OCI-LY7 (cell line): ENCODE measurements at regions of chr5 and their contacts with region 1.

Region 1: DNA sequence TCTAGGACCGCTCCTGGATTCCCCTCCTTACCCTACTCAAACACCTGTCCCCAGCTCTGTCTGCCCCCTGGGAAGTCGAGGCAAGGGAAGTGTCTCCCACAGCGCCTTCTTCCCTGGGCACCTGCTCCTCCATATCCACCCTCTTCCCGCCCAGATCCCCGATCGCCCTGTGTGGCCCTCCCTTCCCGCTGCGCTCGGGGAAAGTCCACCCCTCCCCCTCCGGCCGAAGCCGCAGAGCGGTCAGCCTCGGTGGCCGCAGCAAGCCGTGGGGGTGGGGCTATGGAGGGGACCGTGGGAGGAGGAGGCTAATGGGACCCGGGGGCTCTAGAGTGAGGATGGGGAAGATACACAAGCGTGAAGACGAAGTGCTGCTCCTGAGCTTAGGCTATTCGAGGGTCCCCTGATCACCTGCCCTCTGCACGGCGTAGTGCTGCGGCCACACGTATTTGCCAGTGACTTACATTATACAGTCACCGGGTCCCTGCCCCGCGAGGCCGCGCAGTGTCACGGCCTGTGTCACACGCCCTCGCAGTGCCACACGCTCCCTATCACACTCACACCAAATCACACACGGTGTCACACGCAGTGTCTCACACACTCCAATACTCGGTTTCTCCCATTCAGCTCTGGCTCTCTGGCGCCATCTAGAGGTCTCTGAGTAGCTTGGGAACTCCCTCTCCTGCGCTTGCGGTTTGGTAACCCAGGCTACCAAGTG is 658 bp upstream of the PCDH1 start:
- DNase-seq: peak; percentile 89
- H3K4me3 ChIP-seq: no peak overlapping the region
- H3K27ac ChIP-seq: no peak overlapping the region
- H3K4me1 ChIP-seq: peaks cover 10% of the 10 kb centered on the region
- CTCF ChIP-seq: peak; percentile 97

Region 2: GRCh38 chr5:141101059-141101458 is 777.8 kb before region 1 on chr5:
- CTCF ChIA-PET with region 1: no interaction called
- POLR2A ChIA-PET with region 1: no interaction called
- intact Hi-C with region 1: no loop called
- DNase-seq: no peak
- H3K4me3 ChIP-seq: no peak overlapping the region
- H3K27ac ChIP-seq: no peak overlapping the region
- H3K4me1 ChIP-seq: no peaks in the 10 kb centered on the region
- CTCF ChIP-seq: no peak

Region 3: DNA sequence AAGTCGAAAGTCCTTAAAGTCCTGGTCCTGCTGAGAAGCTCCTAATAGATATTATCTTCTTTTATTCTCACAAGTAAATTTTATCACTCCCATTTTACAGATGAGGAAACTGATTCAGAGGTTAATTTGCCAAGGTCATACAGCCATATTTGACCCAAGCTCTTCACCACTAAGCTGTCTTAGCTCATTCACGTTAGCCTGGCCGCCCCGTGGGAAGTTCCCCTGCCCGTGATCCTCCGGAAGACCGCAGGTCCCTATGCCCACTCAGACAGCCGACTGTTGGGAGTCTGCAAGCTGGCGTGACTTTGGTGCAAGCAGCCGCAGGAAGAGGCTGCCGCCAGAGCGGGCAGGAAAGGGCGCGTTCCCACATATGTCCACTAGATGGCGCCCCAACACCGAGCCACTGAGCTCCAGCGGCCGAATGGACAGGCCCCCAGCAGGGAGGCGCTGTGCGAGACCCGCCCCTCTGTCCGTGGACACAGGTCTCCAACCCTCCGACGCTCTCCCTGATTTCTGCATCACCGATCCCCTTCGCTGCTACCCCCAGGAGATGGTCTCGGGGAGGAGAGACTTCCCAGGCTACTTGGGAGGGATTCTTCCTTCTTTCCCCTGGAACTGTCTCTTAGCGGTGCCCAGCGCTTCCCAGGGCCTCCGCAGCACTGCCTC is 186.9 kb before region 1 on chr5:
- CTCF ChIA-PET with region 1: interaction called, 6 read pairs
- POLR2A ChIA-PET with region 1: interaction called, 5 read pairs
- intact Hi-C with region 1: loop called (anchors 1 kb)
- DNase-seq: peak; percentile 81
- H3K4me3 ChIP-seq: peak overlapping the region; percentile 52
- H3K27ac ChIP-seq: no peak overlapping the region
- H3K4me1 ChIP-seq: peaks cover 16% of the 10 kb centered on the region
- CTCF ChIP-seq: peak; percentile 91

Region 4: DNA sequence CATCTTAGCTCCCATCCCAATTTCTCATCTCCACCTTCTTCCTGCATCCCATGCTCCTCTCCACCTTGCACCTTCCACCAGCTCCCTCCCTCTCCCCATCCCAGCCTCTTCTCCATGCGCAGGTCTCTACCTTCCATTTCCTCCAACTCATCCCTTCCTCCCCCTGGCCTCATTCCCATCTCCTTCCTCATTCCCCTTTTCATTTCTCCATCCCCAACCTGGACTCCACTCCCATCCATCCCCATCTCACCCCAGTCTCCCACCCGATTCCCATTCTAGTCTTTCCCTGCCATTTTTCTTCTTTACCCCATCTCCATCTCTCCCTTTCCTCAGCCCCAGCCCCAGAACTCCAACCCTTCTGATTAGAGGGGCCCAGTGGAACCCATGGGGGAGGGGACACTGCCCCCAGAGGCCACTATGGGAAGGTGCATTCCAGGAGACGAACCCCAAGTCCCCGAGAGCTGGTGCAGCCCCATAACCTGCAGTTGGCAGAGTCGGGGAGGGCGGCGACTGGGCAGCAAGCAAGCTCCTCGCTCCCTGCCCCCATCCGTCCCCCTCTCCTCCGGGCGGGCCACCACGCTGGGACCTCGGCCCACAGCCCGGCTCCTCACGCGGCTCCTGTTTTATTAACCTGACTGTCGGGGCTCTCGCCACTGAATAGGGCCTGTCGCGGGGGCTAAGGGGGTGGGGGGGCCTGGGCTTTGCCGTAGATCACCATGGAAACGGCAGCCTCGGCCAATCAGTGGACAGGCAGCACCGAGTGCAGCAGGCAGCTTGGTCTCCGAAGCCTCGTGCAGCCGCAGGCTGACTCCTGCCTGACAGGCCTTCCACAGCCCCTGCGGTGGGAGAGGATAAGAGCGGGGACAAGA is 67.3 kb before region 1 on chr5:
- CTCF ChIA-PET with region 1: interaction called, 14 read pairs
- POLR2A ChIA-PET with region 1: no interaction called
- intact Hi-C with region 1: loop called (anchors 5 kb)
- DNase-seq: peak; percentile 49
- H3K4me3 ChIP-seq: no peak overlapping the region
- H3K27ac ChIP-seq: no peak overlapping the region
- H3K4me1 ChIP-seq: peaks cover 12% of the 10 kb centered on the region
- CTCF ChIP-seq: peak; percentile 83

Region 5: GRCh38 chr5:141863061-141863479 is 15.8 kb before region 1 on chr5:
- CTCF ChIA-PET with region 1: interaction called, 15 read pairs
- POLR2A ChIA-PET with region 1: no interaction called
- intact Hi-C with region 1: no loop called
- DNase-seq: no peak
- H3K4me3 ChIP-seq: no peak overlapping the region
- H3K27ac ChIP-seq: no peak overlapping the region
- H3K4me1 ChIP-seq: peaks cover 6% of the 10 kb centered on the region
- CTCF ChIP-seq: no peak

Region 6: GRCh38 chr5:141945511-141946051 is 66.7 kb after region 1 on chr5:
- CTCF ChIA-PET with region 1: no interaction called
- POLR2A ChIA-PET with region 1: no interaction called
- intact Hi-C with region 1: no loop called
- DNase-seq: no peak
- H3K4me3 ChIP-seq: no peak overlapping the region
- H3K27ac ChIP-seq: no peak overlapping the region
- H3K4me1 ChIP-seq: no peaks in the 10 kb centered on the region
- CTCF ChIP-seq: no peak

Region 7: GRCh38 chr5:141992349-141992963 is 113.6 kb after region 1 on chr5:
- CTCF ChIA-PET with region 1: no interaction called
- POLR2A ChIA-PET with region 1: no interaction called
- intact Hi-C with region 1: no loop called
- DNase-seq: peak; percentile 73
- H3K4me3 ChIP-seq: no peak overlapping the region
- H3K27ac ChIP-seq: no peak overlapping the region
- H3K4me1 ChIP-seq: no peaks in the 10 kb centered on the region
- CTCF ChIP-seq: peak; percentile 95

Region 8: GRCh38 chr5:142403571-142403971 is 524.7 kb after region 1 on chr5:
- CTCF ChIA-PET with region 1: no interaction called
- POLR2A ChIA-PET with region 1: no interaction called
- intact Hi-C with region 1: no loop called
- DNase-seq: no peak
- H3K4me3 ChIP-seq: no peak overlapping the region
- H3K27ac ChIP-seq: no peak overlapping the region
- H3K4me1 ChIP-seq: no peaks in the 10 kb centered on the region
- CTCF ChIP-seq: no peak